HEK293 (cell line): ENCODE measurements at regions of chr16 and their contacts with region 1.

Region 1: DNA sequence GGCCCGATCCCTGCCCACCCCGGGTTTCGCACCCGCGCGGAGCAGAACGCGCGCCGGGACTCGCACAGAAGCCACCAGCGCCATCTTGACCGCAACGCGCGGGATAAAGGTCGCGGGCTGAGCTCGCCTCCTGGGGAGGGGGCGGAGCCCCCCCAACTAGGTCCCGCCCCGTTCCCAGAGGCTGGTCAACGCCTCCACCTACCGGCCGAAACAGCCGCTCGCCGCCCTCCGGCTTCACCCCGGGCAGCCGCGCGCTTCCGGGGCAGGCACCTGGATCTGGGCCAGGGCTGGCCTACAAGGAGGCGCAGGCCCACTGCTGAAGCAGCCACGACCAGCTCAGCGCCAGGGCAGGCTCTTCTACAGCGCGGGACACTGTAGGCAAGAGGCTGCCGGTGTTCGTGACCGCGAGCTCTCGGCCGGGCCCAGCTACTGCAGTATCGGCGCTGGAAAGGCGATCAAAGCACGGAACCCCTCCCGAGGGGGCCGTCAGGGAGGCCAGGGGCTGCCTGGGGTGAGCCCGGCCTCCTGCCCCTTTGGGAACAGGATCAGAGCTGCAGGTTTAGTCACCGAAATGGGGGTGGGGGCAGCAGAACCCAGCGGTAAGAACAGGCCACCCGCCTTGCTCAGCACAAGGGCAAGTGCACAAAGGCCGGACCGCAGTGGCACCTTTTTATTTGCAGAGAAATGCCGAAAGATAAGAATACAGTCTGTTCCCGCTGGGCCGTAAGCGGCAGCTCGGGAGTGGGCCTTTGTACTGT is at the start of gene ECI1:
- H3K4me3 ChIP-seq: peak within 1 kb of the TSS; percentile 78
- H3K27ac ChIP-seq: peak within 1 kb of the TSS; percentile 91
- H3K4me1 ChIP-seq: peaks cover 7% of the 10 kb centered on the region
- CTCF ChIP-seq: peak; percentile 97

Region 2: GRCh38 chr16:2194852-2195321 is 56.8 kb before region 1 on chr16:
- CTCF ChIA-PET with region 1: interaction called, 14 read pairs
- POLR2A ChIA-PET with region 1: interaction called, 14 read pairs
- H3K4me3 ChIP-seq: no peak overlapping the region
- H3K27ac ChIP-seq: no peak overlapping the region
- H3K4me1 ChIP-seq: peaks cover 9% of the 10 kb centered on the region; the same call in 1 of the 2 replicates
- CTCF ChIP-seq: peak; percentile 89

Region 3: GRCh38 chr16:2213817-2214720 is 37.6 kb before region 1 on chr16:
- CTCF ChIA-PET with region 1: interaction called, 5 read pairs
- POLR2A ChIA-PET with region 1: interaction called, 15 read pairs
- H3K4me3 ChIP-seq: peak overlapping the region; percentile 78
- H3K27ac ChIP-seq: peak overlapping the region; percentile 94
- H3K4me1 ChIP-seq: 0 out of 2 replicates have a peak, but pooled peaks cover 2% of the 10 kb centered on the region
- CTCF ChIP-seq: peak; percentile 28; the same call in 1 of the 2 replicates

Region 4: GRCh38 chr16:2223375-2224182 is 28.1 kb before region 1 on chr16 and contains the start of gene E4F1:
- CTCF ChIA-PET with region 1: interaction called, 5 read pairs
- POLR2A ChIA-PET with region 1: interaction called, 19 read pairs
- H3K4me3 ChIP-seq: peak within 1 kb of the TSS; percentile 96
- H3K27ac ChIP-seq: peak within 1 kb of the TSS; percentile 94
- H3K4me1 ChIP-seq: 0 out of 2 replicates have a peak, but pooled peaks cover 2% of the 10 kb centered on the region
- CTCF ChIP-seq: no peak; the same call in 1 of the 2 replicates

Region 5: GRCh38 chr16:2236337-2237101 is 15.1 kb before region 1 on chr16 and contains the start of gene DNASE1L2:
- CTCF ChIA-PET with region 1: interaction called, 3 read pairs
- POLR2A ChIA-PET with region 1: interaction called, 48 read pairs
- H3K4me3 ChIP-seq: peak within 1 kb of the TSS; percentile 31
- H3K27ac ChIP-seq: peak within 1 kb of the TSS; percentile 48; the same call in 1 of the 2 replicates
- H3K4me1 ChIP-seq: peaks cover 4% of the 10 kb centered on the region; the same call in 1 of the 2 replicates
- CTCF ChIP-seq: no peak

Region 6: GRCh38 chr16:2267913-2268666 is 16.4 kb after region 1 on chr16 and contains the start of gene RNPS1:
- CTCF ChIA-PET with region 1: interaction called, 4 read pairs
- POLR2A ChIA-PET with region 1: interaction called, 15 read pairs
- H3K4me3 ChIP-seq: peak within 1 kb of the TSS; percentile 65
- H3K27ac ChIP-seq: peak within 1 kb of the TSS; percentile 98
- H3K4me1 ChIP-seq: peaks cover 8% of the 10 kb centered on the region; the same call in 1 of the 2 replicates
- CTCF ChIP-seq: peak; percentile 41